ENCODE measurements at regions of chr6 and their contacts with region 1.

Region 1: DNA sequence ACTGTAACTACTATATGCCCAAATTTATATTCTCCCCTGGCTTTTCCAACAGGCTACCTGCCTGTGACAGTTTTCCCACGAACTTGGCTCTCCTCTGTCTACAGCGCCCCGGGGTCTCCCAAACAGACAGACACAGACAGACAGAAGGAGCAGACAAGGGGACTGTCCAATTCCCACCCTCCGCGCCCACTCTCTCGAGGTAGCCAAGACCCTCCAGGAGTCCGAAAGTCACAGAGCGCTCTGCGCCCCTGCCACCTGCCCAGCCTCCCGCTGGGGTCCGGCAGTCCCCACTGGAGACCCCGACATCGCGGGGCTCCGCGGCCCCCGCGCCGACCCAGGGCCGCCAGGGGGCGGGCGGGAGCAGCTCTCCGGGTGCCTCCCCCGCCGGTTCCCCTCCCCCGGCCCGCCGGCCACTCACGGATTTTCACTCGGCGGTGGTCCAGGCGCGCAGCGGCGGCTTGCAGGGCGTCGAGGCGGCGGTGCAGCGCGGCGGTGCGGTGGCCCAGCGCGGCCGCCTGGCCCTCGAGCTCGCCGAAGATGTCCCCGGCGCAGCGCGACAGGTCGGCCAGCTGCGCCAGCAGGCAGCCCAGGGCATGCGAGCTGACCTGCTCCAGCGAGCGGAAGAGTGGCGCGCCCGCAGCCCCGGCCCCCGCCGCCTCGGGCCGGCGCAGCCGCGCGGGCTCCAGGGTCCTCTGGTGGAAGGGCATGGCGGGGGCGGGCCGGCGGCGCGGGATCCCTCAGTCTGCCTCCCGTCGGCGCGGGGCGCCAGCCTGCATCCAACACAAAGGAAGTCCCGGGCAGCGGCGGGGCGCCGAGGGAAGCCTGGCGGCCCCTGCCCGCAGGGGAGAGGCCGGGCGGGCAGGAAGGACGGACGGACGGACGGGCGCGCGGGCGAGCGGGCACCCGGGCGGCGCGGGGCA is 81.3 kb upstream of the CCDC28A start:
- DNase-seq: peak; percentile 90
- CTCF ChIP-seq: peak; percentile 66

Region 2: DNA sequence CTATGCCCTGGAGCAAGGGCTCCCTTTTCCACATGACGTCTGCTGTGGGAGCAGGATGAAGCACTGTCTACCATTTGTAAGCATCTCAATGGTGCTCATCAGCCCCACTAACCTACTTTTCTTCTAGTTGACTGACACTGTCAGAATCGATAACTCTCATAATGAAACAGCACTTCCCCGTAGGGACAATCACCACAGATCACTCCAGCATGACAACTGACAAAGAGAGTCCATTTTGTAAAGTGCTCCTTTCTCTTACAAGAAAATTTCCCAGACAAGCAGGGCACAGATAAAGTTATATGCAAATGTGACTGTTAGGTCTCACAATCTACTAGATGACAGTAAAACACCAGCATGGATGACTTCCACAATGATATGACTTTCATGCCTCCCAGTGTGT is 241.9 kb before region 1 on chr6:
- CTCF ChIA-PET with region 1: no interaction called
- POLR2A ChIA-PET with region 1: no interaction called
- DNase-seq: no peak
- CTCF ChIP-seq: no peak

Region 3: DNA sequence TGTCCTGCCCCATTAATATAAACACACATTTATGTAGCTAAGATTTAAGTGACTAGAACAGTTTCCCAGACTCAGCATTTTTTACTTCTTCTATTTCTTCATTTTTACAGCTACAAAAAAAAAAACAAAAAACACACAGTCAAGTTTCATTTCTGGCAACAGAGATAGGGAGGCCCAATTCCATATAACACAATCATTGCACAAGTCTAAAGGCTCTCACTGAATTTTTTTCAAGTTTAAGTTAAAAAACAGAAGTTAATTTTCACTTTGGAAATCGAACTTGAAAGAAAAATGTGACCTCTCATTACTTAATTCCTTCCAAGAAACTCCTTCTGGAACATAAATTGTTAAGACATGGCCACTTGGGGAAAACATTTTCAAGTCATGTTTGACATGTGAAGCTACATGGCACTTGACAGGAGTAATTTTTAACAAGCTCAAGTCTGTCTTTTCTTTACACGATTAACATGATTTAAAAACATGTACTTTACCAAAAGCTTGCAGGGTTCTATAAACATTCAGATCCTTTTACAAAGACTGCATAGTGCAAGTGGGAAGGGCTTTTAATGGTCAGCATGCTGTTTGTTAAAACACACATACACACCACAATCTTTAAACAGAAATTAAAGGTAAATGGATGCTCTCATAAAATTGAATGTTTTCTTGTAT is 18.8 kb before region 1 on chr6:
- CTCF ChIA-PET with region 1: interaction called, 20 read pairs
- POLR2A ChIA-PET with region 1: no interaction called
- DNase-seq: no peak
- CTCF ChIP-seq: no peak

Region 4: GRCh38 chr6:138765896-138766655 is 73.8 kb after region 1 on chr6:
- CTCF ChIA-PET with region 1: interaction called, 24 read pairs
- POLR2A ChIA-PET with region 1: no interaction called
- DNase-seq: peak; percentile 43
- CTCF ChIP-seq: peak; percentile 60

Region 5: GRCh38 chr6:138795809-138796603 is 103.7 kb after region 1 on chr6 and contains the start of gene ECT2L:
- CTCF ChIA-PET with region 1: no interaction called
- POLR2A ChIA-PET with region 1: no interaction called
- DNase-seq: no peak
- CTCF ChIP-seq: no peak

Region 6: DNA sequence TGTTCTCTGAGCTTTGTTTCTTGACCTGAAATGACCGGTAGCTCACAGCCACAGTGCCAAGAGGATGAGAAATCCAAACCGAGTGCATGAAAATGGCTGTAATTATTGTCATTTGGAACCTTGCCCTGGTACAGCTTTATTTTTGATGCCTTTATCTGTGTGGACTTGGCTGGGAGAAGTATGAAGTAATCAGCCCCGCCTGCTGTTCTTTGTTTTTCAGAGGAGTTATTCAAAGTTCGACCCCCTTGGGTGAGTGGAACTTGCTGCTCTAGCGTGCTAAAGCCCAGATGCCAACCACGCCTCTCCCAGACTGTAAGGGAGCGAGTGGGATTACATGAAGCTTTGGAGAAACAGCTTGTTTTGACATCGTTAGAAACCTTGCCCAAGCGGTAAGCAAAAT is 151.9 kb after region 1 on chr6:
- CTCF ChIA-PET with region 1: no interaction called
- POLR2A ChIA-PET with region 1: no interaction called
- DNase-seq: no peak
- CTCF ChIP-seq: no peak

Measured in GM10248 (cell line).